Sigmoid colon (tissue), 7 donors: ENCODE measurements at regions of chr16 and their contacts with region 1.

Region 1: GRCh38 chr16:78607486-78607885 is 508.0 kb downstream of the WWOX start:
- DNase-seq: no peak
- H3K4me3 ChIP-seq: peak overlapping the region in 1 of 4 donors; percentile 47
- H3K27ac ChIP-seq: peak overlapping the region; percentile 47 to 77 (median 60)
- H3K4me1 ChIP-seq: peaks cover 0 to 42% (median 28%) of the 10 kb centered on the region in 4 donors
- H3K27me3 ChIP-seq: no peaks in the 10 kb centered on the region
- CTCF ChIP-seq: no peak
- EP300 ChIP-seq: no peak
- POLR2A ChIP-seq: no peak

Region 2: GRCh38 chr16:76639685-76640289 is 1967.7 kb before region 1 on chr16:
- intact Hi-C with region 1: no loop called
- DNase-seq: no peak
- H3K4me3 ChIP-seq: no peak overlapping the region
- H3K27ac ChIP-seq: no peak overlapping the region
- H3K4me1 ChIP-seq: no peaks in the 10 kb centered on the region
- H3K27me3 ChIP-seq: no peaks in the 10 kb centered on the region
- CTCF ChIP-seq: no peak
- EP300 ChIP-seq: no peak
- POLR2A ChIP-seq: no peak

Region 3: GRCh38 chr16:79334127-79334526 is 726.6 kb after region 1 on chr16:
- intact Hi-C with region 1: loop called (anchors 10 kb)
- DNase-seq: no peak
- H3K4me3 ChIP-seq: no peak overlapping the region
- H3K27ac ChIP-seq: no peak overlapping the region
- H3K4me1 ChIP-seq: peaks cover 0 to 31% (median 15%) of the 10 kb centered on the region in 4 donors
- H3K27me3 ChIP-seq: no peaks in the 10 kb centered on the region
- CTCF ChIP-seq: no peak
- EP300 ChIP-seq: no peak
- POLR2A ChIP-seq: no peak